MCF 10A (cell line): ENCODE measurements at regions of chr10 and their contacts with region 1.

Region 1: DNA sequence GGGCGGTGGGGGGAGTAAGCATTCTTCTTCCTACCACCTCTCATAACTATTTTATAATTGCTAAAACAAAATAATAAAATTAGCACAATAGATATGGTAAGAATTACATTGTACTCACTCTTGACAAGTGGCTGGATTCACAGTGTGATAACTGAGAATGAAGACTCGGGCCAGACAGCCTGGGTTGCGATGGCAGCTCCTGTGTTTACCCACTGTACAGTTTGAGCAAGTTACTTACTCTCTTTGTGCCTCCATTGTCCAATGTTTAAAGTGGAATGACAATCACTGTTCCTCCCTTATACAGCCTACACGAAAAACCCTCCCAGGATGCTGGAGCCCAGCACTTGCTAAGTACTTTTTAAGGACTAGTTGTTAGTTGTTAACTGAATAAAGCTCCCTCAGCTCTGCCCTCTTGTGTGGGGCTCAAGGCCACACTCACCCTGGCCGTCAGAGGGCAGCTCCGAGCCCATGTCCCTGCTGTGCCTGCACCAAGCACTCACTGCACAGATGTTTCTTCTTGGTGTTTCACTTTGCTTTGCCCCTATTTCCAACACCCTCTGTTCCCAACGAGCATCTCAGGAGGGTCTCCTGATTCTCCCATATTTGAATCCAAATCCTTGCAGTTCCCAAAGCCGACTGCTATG is 56.4 kb upstream of the NPS start:
- DNase-seq: peak; percentile 47
- H3K4me3 Mint-ChIP-seq: no peak overlapping the region
- H3K27ac Mint-ChIP-seq: no peak overlapping the region
- H3K4me1 Mint-ChIP-seq: no peaks in the 10 kb centered on the region
- H3K27me3 Mint-ChIP-seq: peaks cover 37% of the 10 kb centered on the region
- CTCF ChIP-seq: peak; percentile 39

Region 2: DNA sequence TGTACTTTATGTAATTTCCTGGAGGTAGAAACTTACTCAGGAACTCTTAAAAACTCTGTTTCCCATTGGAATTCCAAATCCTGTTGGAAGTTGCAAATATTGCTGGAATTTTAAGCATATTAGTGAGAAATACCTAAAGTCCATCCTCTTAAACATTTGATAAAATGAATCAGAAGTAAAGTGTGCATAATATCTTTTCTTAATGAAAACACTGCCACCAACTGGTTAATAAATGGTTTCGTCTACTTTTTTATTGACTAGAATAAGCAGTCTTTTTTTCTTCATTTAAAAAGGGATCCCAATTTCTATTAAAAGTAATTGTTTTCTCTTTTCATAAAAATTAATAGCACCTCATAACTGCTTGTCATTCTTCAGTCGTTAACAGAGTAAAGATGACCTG is 84.6 kb after region 1 on chr10:
- CTCF ChIA-PET with region 1: interaction called, 5 read pairs
- POLR2A ChIA-PET with region 1: no interaction called
- intact Hi-C with region 1: loop called (anchors 5 kb)
- DNase-seq: no peak
- H3K4me3 Mint-ChIP-seq: no peak overlapping the region
- H3K27ac Mint-ChIP-seq: no peak overlapping the region
- H3K4me1 Mint-ChIP-seq: peaks cover 4% of the 10 kb centered on the region
- H3K27me3 Mint-ChIP-seq: peaks cover 64% of the 10 kb centered on the region
- CTCF ChIP-seq: peak; percentile 21